PC-9 (cell line): ENCODE measurements at regions of chr17 and their contacts with region 1.

Region 1: GRCh38 chr17:69144331-69145255 is 2.9 kb upstream of the ABCA6 start:
- DNase-seq: no peak
- H3K4me3 ChIP-seq: no peak overlapping the region
- H3K27ac ChIP-seq: no peak overlapping the region
- H3K4me1 ChIP-seq: no peaks in the 10 kb centered on the region
- H3K27me3 ChIP-seq: no peaks in the 10 kb centered on the region
- CTCF ChIP-seq: no peak

Region 2: DNA sequence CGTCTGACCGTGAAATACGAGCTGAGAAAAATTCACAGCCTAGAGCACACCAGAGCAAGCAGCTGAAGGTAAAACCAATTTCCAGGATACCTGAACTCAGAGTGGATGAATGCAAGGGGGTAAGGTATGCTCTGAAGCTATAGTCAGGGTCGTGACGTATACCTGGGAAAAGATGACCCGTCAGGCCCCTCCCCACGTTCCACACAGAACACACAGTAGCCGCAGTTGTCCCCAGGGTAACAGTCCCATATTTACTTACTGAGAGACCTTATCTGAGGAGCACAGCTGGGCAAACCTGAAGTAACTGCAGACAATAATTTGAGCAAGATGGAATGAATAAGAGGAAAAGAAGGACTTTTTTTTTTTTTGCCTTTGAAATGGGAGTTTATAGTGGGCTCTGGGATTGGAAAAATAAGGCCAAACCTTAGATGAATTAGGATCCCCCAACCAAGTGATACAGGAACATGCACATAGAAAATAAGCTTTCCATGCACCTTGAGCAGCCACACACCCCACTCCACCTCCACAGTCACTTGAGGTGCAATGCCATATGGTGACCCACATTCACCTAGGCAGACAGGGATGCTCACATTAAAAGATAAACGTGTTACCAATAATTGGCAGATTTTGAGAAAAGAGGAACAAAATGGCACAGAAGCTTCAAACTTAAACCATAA is 40.9 kb before region 1 on chr17:
- CTCF ChIA-PET with region 1: no interaction called
- POLR2A ChIA-PET with region 1: interaction called, 10 read pairs
- intact Hi-C with region 1: no loop called
- DNase-seq: no peak
- H3K4me3 ChIP-seq: no peak overlapping the region
- H3K27ac ChIP-seq: no peak overlapping the region
- H3K4me1 ChIP-seq: no peaks in the 10 kb centered on the region
- H3K27me3 ChIP-seq: no peaks in the 10 kb centered on the region
- CTCF ChIP-seq: no peak

Region 3: GRCh38 chr17:69460963-69461922 is 316.6 kb after region 1 on chr17:
- CTCF ChIA-PET with region 1: no interaction called
- POLR2A ChIA-PET with region 1: no interaction called
- intact Hi-C with region 1: no loop called
- DNase-seq: no peak
- H3K4me3 ChIP-seq: no peak overlapping the region
- H3K27ac ChIP-seq: no peak overlapping the region
- H3K4me1 ChIP-seq: 0 out of 2 replicates have a peak, but pooled peaks cover under 1% of the 10 kb centered on the region
- H3K27me3 ChIP-seq: no peaks in the 10 kb centered on the region
- CTCF ChIP-seq: no peak